ENCODE measurements at regions of chr18 and their contacts with region 1.

Region 1: GRCh38 chr18:27143580-27144287 is 41.4 kb downstream of the CHST9 start:
- DNase-seq: peak; percentile 43 to 47
- ATAC-seq: peak; percentile 71 to 99 (median 94)
- H3K4me3 ChIP-seq: no peak overlapping the region
- H3K27ac ChIP-seq: peak overlapping the region in 8 of 10 donors; percentile 39 to 76 (median 70)
- H3K4me1 ChIP-seq: peaks cover 0 to 15% (median 0%) of the 10 kb centered on the region in 9 donors
- H3K27me3 ChIP-seq: no peaks in the 10 kb centered on the region
- CTCF ChIP-seq: no peak

Region 2: DNA sequence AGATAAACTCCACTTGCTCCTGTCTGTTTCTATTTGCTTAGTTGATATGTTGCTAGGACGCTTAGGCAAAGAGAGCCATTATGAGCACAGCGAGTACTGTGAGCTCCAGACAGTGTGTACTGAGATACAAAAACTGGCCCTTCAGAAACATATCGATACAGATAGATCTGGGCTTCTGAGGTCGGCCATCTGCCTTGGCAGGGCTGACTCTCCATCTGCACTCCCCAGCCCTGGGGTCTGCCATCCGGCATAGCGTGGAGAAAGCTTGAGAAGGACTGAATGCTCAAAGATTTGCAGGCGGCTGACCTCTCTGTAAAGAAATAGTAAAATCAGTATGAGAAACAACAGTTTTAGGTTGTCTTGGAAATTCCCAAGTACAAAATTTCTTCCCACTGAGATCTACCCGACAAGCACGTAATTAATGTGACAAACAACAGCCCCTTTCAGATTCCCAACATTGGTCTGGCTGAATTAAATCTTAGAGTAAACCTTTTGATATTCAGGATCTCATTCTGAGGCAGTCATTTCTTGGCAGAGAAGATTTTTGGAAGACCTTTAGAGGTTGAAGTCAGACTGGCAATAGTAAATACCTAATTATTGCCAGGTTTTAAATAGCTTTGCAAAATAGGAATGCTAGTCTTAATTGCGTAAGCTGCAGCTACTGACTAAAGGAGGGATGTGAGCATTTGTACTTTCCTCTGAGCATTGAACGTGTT is 86.1 kb before region 1 on chr18:
- intact Hi-C with region 1: loop called in 4 of 10 experiments (anchors 5 to 10 kb)
- DNase-seq: peak in 1 of 2 donors; percentile 23
- ATAC-seq: peak; percentile 73 to 97 (median 94)
- H3K4me3 ChIP-seq: peak overlapping the region in 8 of 10 donors; percentile 1 to 38 (median 10)
- H3K27ac ChIP-seq: peak overlapping the region; percentile 70 to 97 (median 88)
- H3K4me1 ChIP-seq: peaks cover 0 to 19% (median 12%) of the 10 kb centered on the region in 9 donors
- H3K27me3 ChIP-seq: no peaks in the 10 kb centered on the region
- CTCF ChIP-seq: no peak

Region 3: DNA sequence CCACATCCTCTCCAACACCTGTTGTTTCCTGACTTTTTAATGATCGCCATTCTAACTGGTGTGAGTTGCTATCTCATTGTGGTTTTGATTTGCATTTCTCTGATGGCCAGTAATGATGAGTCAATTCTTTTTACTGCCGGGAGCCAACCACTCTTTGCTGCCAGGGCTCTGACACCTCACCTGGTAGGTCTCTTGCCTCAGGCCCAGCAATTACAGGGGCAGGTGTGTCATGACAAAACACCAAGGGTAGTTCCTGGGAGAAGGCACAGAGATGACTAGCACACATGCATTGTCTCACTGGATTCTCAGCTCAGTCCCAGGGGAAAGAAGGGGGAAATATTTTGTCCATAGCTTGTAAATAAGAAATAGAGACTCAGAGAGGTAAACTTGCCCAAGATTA is 80.9 kb before region 1 on chr18:
- intact Hi-C with region 1: loop called in 4 of 10 experiments (anchors 5 to 10 kb)
- DNase-seq: no peak
- ATAC-seq: no peak
- H3K4me3 ChIP-seq: no peak overlapping the region
- H3K27ac ChIP-seq: no peak overlapping the region
- H3K4me1 ChIP-seq: peaks cover 0 to 15% (median 5%) of the 10 kb centered on the region in 9 donors
- H3K27me3 ChIP-seq: no peaks in the 10 kb centered on the region
- CTCF ChIP-seq: no peak

Region 4: GRCh38 chr18:27198036-27198435 is 54.3 kb after region 1 on chr18:
- intact Hi-C with region 1: loop called in 1 of 10 experiments (anchors 10 kb)
- DNase-seq: no peak
- ATAC-seq: no peak
- H3K4me3 ChIP-seq: no peak overlapping the region
- H3K27ac ChIP-seq: no peak overlapping the region
- H3K4me1 ChIP-seq: no peaks in the 10 kb centered on the region
- H3K27me3 ChIP-seq: no peaks in the 10 kb centered on the region
- CTCF ChIP-seq: no peak